Caco-2 (cell line): ENCODE measurements at regions of chr5 and their contacts with region 1.

Region 1: GRCh38 chr5:37248970-37249686 is at the start of gene CPLANE1:
- DNase-seq: peak; percentile 80 to 89
- H3K4me3 ChIP-seq: peak within 1 kb of the TSS; percentile 81
- H3K4me3 Mint-ChIP-seq: peak within 1 kb of the TSS; percentile 93
- H3K27ac Mint-ChIP-seq: peak within 1 kb of the TSS; percentile 91
- H3K4me1 ChIP-seq: no peaks in the 10 kb centered on the region
- H3K4me1 Mint-ChIP-seq: no peaks in the 10 kb centered on the region
- H3K27me3 ChIP-seq: no peaks in the 10 kb centered on the region
- H3K27me3 Mint-ChIP-seq: no peaks in the 10 kb centered on the region
- CTCF ChIP-seq: peak in 1 of 2 experiments; percentile 11
- total RNA-seq, gene CPLANE1: 15.3 and 17.3 TPM in 2 replicates

Region 2: DNA sequence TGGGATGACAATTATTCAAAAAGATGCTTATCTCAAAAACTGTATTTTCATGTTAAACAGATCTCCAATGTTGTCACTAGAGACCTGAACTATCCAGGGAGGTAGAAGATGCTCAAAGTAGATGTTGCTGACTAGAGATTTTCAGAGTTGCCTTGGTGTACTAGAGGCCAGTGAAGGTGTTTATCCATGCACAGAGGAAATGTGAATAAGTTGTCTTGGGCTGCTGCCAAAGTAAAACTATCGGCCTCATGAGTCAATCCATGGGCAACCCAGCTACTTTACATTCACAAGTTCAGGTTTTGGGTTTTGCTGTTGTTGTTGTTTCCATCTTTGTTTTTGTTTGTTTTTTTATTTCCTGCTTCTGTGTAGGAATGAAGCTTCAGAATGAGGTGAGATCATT is 806.3 kb before region 1 on chr5:
- CTCF ChIA-PET with region 1: no interaction called
- POLR2A ChIA-PET with region 1: no interaction called
- intact Hi-C with region 1: no loop called
- DNase-seq: no peak
- H3K4me3 ChIP-seq: no peak overlapping the region
- H3K4me3 Mint-ChIP-seq: peak overlapping the region; percentile 10
- H3K27ac Mint-ChIP-seq: peak overlapping the region; percentile 75
- H3K4me1 ChIP-seq: peaks cover 54% of the 10 kb centered on the region
- H3K4me1 Mint-ChIP-seq: peaks cover 36% of the 10 kb centered on the region
- H3K27me3 ChIP-seq: no peaks in the 10 kb centered on the region
- H3K27me3 Mint-ChIP-seq: no peaks in the 10 kb centered on the region
- CTCF ChIP-seq: no peak

Region 3: GRCh38 chr5:37272564-37272963 is 23.4 kb after region 1 on chr5:
- CTCF ChIA-PET with region 1: interaction called, 3 read pairs
- POLR2A ChIA-PET with region 1: interaction called, 11 read pairs
- intact Hi-C with region 1: no loop called
- DNase-seq: peak; percentile 77 to 86
- H3K4me3 ChIP-seq: no peak overlapping the region
- H3K4me3 Mint-ChIP-seq: no peak overlapping the region
- H3K27ac Mint-ChIP-seq: peak overlapping the region; percentile 85
- H3K4me1 ChIP-seq: peaks cover 6% of the 10 kb centered on the region
- H3K4me1 Mint-ChIP-seq: peaks cover 7% of the 10 kb centered on the region
- H3K27me3 ChIP-seq: no peaks in the 10 kb centered on the region
- H3K27me3 Mint-ChIP-seq: no peaks in the 10 kb centered on the region
- CTCF ChIP-seq: no peak

Region 4: GRCh38 chr5:37283214-37283820 is 34.2 kb after region 1 on chr5:
- CTCF ChIA-PET with region 1: no interaction called
- POLR2A ChIA-PET with region 1: no interaction called
- intact Hi-C with region 1: loop called (anchors 5 kb)
- DNase-seq: peak in 1 of 2 experiments; percentile 21
- H3K4me3 ChIP-seq: no peak overlapping the region
- H3K4me3 Mint-ChIP-seq: no peak overlapping the region
- H3K27ac Mint-ChIP-seq: no peak overlapping the region
- H3K4me1 ChIP-seq: no peaks in the 10 kb centered on the region
- H3K4me1 Mint-ChIP-seq: no peaks in the 10 kb centered on the region
- H3K27me3 ChIP-seq: no peaks in the 10 kb centered on the region
- H3K27me3 Mint-ChIP-seq: no peaks in the 10 kb centered on the region
- CTCF ChIP-seq: no peak

Region 5: GRCh38 chr5:38112938-38113337 is 863.8 kb after region 1 on chr5:
- CTCF ChIA-PET with region 1: no interaction called
- POLR2A ChIA-PET with region 1: interaction called, 10 read pairs
- intact Hi-C with region 1: no loop called
- DNase-seq: no peak
- H3K4me3 ChIP-seq: no peak overlapping the region
- H3K4me3 Mint-ChIP-seq: no peak overlapping the region
- H3K27ac Mint-ChIP-seq: no peak overlapping the region
- H3K4me1 ChIP-seq: 0 out of 2 replicates have a peak, but pooled peaks cover 4% of the 10 kb centered on the region
- H3K4me1 Mint-ChIP-seq: no peaks in the 10 kb centered on the region
- H3K27me3 ChIP-seq: no peaks in the 10 kb centered on the region
- H3K27me3 Mint-ChIP-seq: no peaks in the 10 kb centered on the region
- CTCF ChIP-seq: no peak